Activated naive CD4-positive, alpha-beta T cell treated with anti-CD3 and anti-CD28 coated beads for 36 hours (primary cell): ENCODE measurements at regions of chr14 and their contacts with region 1.

Region 1: GRCh38 chr14:65824285-65824977 is 411.9 kb downstream of the FUT8 start:
- DNase-seq: peak; percentile 78
- H3K4me3 Mint-ChIP-seq: no peak overlapping the region
- H3K27ac Mint-ChIP-seq: no peak overlapping the region
- H3K4me1 Mint-ChIP-seq: peaks cover 5% of the 10 kb centered on the region
- H3K27me3 Mint-ChIP-seq: no peaks in the 10 kb centered on the region

Region 2: DNA sequence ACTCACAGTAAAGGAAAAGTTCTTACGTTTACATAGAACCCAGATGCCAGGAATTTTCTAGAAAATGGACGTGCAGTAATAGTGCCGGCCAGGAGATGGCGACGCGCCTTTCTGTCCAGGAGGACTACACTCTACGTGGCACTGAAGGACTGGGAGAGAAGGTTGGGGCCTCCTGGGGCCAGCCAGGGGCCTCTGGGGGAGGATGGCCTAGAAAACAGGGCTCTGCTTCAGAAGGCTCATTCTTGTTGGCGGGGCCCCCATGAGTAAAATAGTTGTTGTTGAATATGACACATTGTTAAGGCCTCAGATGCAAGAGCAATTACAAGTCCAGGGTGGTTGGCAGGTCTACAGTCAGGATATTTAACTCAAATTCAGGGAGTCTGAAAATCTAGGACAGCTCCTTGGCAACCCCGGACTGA is 602.0 kb before region 1 on chr14:
- CTCF ChIA-PET with region 1: interaction called, 3 read pairs
- intact Hi-C with region 1: loop called (anchors 1 kb)
- DNase-seq: peak; percentile 74
- H3K4me3 Mint-ChIP-seq: no peak overlapping the region
- H3K27ac Mint-ChIP-seq: no peak overlapping the region
- H3K4me1 Mint-ChIP-seq: peaks cover 28% of the 10 kb centered on the region
- H3K27me3 Mint-ChIP-seq: no peaks in the 10 kb centered on the region

Region 3: GRCh38 chr14:65419619-65420252 is 404.7 kb before region 1 on chr14:
- CTCF ChIA-PET with region 1: interaction called, 71 read pairs
- intact Hi-C with region 1: loop called (anchors 1 kb)
- DNase-seq: no peak
- H3K4me3 Mint-ChIP-seq: no peak overlapping the region
- H3K27ac Mint-ChIP-seq: no peak overlapping the region
- H3K4me1 Mint-ChIP-seq: peaks cover 27% of the 10 kb centered on the region
- H3K27me3 Mint-ChIP-seq: no peaks in the 10 kb centered on the region

Region 4: GRCh38 chr14:65847075-65847847 is 22.8 kb after region 1 on chr14:
- CTCF ChIA-PET with region 1: interaction called, 23 read pairs
- intact Hi-C with region 1: no loop called
- DNase-seq: peak; percentile 83
- H3K4me3 Mint-ChIP-seq: no peak overlapping the region
- H3K27ac Mint-ChIP-seq: peak overlapping the region; percentile 71
- H3K4me1 Mint-ChIP-seq: peaks cover 62% of the 10 kb centered on the region
- H3K27me3 Mint-ChIP-seq: no peaks in the 10 kb centered on the region

Region 5: DNA sequence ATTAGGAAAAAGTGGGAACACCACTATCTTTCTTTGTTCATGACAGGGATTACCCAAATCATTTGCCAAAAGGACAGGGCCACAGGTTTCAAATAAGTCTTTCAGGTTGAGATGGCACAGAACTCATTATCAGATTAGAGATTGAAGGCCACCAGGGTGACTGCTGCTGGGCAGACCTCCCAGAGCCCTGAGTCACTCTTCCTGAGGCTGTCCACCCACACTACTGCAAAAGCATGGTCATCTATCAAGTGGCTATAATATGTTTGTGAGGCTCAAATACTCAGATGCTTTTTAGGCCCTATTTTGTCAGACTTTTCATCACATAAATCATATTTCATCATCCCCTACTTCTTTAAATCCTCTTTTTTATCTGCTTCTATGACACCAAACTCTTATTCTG is 506.5 kb after region 1 on chr14:
- CTCF ChIA-PET with region 1: no interaction called
- intact Hi-C with region 1: no loop called
- DNase-seq: no peak
- H3K4me3 Mint-ChIP-seq: no peak overlapping the region
- H3K27ac Mint-ChIP-seq: no peak overlapping the region
- H3K4me1 Mint-ChIP-seq: no peaks in the 10 kb centered on the region
- H3K27me3 Mint-ChIP-seq: no peaks in the 10 kb centered on the region

Region 6: DNA sequence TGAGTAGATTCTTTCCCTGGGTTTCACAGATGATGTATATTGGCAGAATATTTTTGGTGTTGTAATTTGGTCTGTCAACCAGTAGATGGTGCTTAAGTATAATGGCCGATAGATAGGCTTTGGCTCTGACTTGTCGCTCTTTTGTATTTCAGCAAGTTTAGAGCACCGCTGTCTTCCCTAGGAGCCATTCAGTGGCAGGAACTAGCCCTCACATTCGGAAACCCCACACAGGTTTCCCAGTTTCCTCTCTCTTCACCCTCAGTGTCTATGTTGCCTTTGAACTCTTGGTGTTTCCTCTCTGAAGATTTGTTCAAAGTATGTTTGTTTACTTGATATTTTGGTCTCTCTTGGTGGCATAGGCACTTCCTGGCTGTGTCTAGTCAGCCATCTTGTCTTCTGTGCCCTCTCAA is 785.7 kb after region 1 on chr14:
- CTCF ChIA-PET with region 1: no interaction called
- intact Hi-C with region 1: no loop called
- DNase-seq: no peak
- H3K4me3 Mint-ChIP-seq: no peak overlapping the region
- H3K27ac Mint-ChIP-seq: peak overlapping the region; percentile 46
- H3K4me1 Mint-ChIP-seq: peaks cover 17% of the 10 kb centered on the region
- H3K27me3 Mint-ChIP-seq: no peaks in the 10 kb centered on the region